ENCODE measurements at regions of chrX and their contacts with region 1.

Region 1: DNA sequence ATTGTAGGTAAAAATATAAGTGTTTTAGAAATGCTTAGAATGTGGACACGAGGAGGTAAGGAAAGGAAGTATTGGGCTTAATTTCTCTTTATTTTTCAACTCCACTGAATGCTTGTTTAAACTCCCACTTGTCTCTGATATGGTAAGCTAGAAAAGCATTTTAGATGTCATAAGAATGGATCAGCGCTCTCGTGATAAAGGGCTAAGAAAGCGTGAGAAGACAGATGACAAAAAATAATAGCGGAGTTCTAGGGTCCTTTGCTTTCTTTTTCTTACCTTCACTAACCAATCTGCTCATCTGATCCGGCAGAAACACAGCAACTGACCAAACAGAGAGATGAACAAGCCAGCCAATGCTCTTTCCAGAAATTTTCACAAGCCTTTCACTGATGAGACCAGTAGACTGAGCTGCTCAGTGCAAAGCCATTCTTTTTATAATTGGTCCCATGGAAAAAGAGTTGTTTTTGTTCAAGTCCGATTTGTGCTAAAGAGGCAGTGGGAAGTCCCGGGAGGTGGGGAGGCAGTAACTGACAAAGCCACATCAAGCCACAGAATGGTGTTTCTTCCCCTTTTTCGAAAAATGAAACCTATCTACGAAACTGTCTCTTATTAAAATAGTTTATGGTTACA is at the start of gene TASL:
- DNase-seq: peak; percentile 57
- H3K4me3 ChIP-seq: peak within 1 kb of the TSS; percentile 60
- H3K27ac ChIP-seq: peak within 1 kb of the TSS; percentile 11
- H3K4me1 ChIP-seq: peaks cover 15% of the 10 kb centered on the region
- CTCF ChIP-seq: no peak
- total RNA-seq, gene TASL: 0.13 TPM in 1 of 2 replicates, not detected in the other

Region 2: GRCh38 chrX:30593435-30594200 is 16.1 kb after region 1 on chrX:
- CTCF ChIA-PET with region 1: no interaction called
- POLR2A ChIA-PET with region 1: interaction called, 3 read pairs
- intact Hi-C with region 1: loop called (anchors 2 kb)
- DNase-seq: peak; percentile 52
- H3K4me3 ChIP-seq: no peak overlapping the region
- H3K27ac ChIP-seq: no peak overlapping the region
- H3K4me1 ChIP-seq: peaks cover 28% of the 10 kb centered on the region
- CTCF ChIP-seq: peak; percentile 69